A673 (cell line): ENCODE measurements at regions of chr2 and their contacts with region 1.

Region 1: DNA sequence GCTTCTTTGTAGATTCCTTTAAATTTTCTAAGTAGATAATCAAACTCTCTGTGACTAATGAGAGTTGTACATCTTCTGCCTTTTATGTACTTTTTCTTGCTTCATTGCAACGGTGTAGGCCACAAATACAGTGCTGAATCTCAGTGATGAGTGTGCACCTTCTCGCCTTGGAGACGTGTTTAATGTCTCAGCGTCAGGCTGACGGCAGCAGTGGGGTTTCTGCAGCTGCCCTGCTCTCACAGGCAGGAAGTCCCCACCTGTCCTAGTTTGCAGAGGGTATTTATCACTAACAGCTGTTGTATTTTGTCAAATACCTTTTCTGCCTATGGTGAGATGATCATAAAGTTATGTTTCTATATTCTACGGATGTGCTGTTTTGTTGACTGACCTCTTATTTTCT is 13.3 kb downstream of the AGXT start:
- DNase-seq: no peak
- H3K4me3 ChIP-seq: no peak overlapping the region
- H3K27ac ChIP-seq: no peak overlapping the region
- H3K4me1 ChIP-seq: no peaks in the 10 kb centered on the region
- H3K27me3 ChIP-seq: no peaks in the 10 kb centered on the region
- CTCF ChIP-seq: no peak

Region 2: GRCh38 chr2:240819858-240820606 is 61.9 kb before region 1 on chr2 and contains the start of gene KIF1A:
- CTCF ChIA-PET with region 1: interaction called, 21 read pairs
- POLR2A ChIA-PET with region 1: no interaction called
- intact Hi-C with region 1: no loop called
- DNase-seq: peak; percentile 91
- H3K4me3 ChIP-seq: peak within 1 kb of the TSS; percentile 86
- H3K27ac ChIP-seq: peak within 1 kb of the TSS; percentile 82
- H3K4me1 ChIP-seq: peaks cover 16% of the 10 kb centered on the region
- H3K27me3 ChIP-seq: peaks cover 14% of the 10 kb centered on the region
- CTCF ChIP-seq: no peak
- total RNA-seq, gene KIF1A: 301 and 330 TPM in 2 replicates

Region 3: GRCh38 chr2:240851078-240851991 is 30.6 kb before region 1 on chr2:
- CTCF ChIA-PET with region 1: no interaction called
- POLR2A ChIA-PET with region 1: no interaction called
- intact Hi-C with region 1: no loop called
- DNase-seq: peak; percentile 81
- H3K4me3 ChIP-seq: no peak overlapping the region
- H3K27ac ChIP-seq: no peak overlapping the region
- H3K4me1 ChIP-seq: no peaks in the 10 kb centered on the region
- H3K27me3 ChIP-seq: no peaks in the 10 kb centered on the region
- CTCF ChIP-seq: peak; percentile 95

Region 4: DNA sequence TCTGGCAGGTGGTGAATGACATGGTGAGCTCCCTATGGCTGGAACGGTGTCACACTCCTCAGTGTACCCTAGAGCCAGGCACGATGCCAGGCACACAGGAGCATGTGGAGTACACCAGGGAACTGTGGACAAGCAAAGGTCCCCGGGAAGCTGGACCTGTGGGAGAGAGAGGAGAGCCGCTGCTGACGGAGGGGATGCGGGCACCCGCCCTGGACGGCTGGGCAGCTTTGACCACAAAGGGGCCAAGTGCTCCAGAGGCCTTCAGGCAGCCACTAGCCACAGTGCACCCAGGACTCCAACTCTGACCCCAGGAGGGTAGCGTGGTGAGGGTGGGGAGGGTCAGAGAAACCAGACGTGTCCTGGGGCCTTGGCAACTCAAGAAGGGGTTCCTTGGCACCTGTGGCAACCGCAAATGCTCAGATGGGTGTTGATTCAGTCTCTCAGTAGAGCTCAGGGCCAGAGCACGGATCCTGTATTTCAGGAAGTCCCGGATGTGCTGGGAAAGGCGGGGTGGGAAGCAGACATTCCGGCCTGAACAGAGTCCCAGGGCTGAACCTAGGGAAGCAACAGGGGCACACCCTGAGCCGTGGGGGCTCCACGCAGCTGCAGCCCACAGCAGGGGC is 16.3 kb after region 1 on chr2:
- CTCF ChIA-PET with region 1: no interaction called
- POLR2A ChIA-PET with region 1: no interaction called
- intact Hi-C with region 1: no loop called
- DNase-seq: no peak
- H3K4me3 ChIP-seq: no peak overlapping the region
- H3K27ac ChIP-seq: no peak overlapping the region
- H3K4me1 ChIP-seq: no peaks in the 10 kb centered on the region
- H3K27me3 ChIP-seq: no peaks in the 10 kb centered on the region
- CTCF ChIP-seq: no peak